OCI-LY7 (cell line): ENCODE measurements at regions of chr1 and their contacts with region 1.

Region 1: GRCh38 chr1:111719674-111720132 is 19.5 kb downstream of the INKA2 start:
- DNase-seq: no peak
- H3K4me3 ChIP-seq: no peak overlapping the region
- H3K27ac ChIP-seq: no peak overlapping the region
- H3K4me1 ChIP-seq: peaks cover 11% of the 10 kb centered on the region
- CTCF ChIP-seq: no peak

Region 2: GRCh38 chr1:111704776-111705175 is 14.9 kb before region 1 on chr1:
- CTCF ChIA-PET with region 1: no interaction called
- POLR2A ChIA-PET with region 1: interaction called, 11 read pairs
- intact Hi-C with region 1: no loop called
- DNase-seq: no peak
- H3K4me3 ChIP-seq: no peak overlapping the region
- H3K27ac ChIP-seq: no peak overlapping the region
- H3K4me1 ChIP-seq: no peaks in the 10 kb centered on the region
- CTCF ChIP-seq: no peak

Region 3: GRCh38 chr1:111769517-111770146 is 49.9 kb after region 1 on chr1:
- CTCF ChIA-PET with region 1: no interaction called
- POLR2A ChIA-PET with region 1: interaction called, 3 read pairs
- intact Hi-C with region 1: loop called (anchors 2 kb)
- DNase-seq: peak; percentile 80
- H3K4me3 ChIP-seq: no peak overlapping the region
- H3K27ac ChIP-seq: no peak overlapping the region
- H3K4me1 ChIP-seq: no peaks in the 10 kb centered on the region
- CTCF ChIP-seq: peak; percentile 97

Region 4: DNA sequence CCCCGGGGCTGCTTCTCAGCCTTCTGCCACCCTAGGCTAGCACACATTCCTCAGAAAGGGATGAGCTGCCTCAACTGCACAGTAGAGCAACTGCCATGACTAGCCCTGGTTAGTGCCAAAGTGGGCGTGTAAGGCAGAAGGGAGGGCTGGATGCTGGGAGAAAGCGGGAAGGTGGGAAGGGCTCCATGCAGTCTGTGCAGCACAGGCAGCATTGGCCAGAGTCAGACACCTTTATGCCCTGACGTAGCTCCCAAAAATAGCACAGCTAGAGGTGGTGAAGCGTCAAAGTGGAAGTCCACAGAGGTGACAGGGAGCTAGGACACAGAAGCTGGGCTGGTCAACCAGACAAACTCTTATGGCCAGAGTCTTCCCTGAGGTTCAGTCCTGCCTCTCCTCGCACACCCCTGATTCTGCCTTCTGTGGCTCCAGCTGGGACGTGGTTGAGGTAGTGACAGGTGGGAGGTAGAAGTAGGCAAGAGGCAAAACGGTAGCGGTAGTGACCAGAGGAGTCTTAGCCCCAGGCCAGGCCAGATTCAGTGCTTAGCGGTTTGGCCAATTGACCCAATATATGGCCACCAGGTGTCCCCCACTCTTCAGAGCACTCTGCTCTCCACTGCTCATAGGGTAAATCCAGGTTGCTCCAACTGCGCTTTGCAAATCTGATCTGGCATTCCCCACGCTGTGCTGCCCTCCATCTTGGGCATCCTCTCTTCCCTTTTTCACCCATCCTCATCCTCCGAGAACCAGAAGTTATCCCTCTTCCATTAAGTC is 81.6 kb after region 1 on chr1:
- CTCF ChIA-PET with region 1: no interaction called
- POLR2A ChIA-PET with region 1: no interaction called
- intact Hi-C with region 1: no loop called
- DNase-seq: no peak
- H3K4me3 ChIP-seq: no peak overlapping the region
- H3K27ac ChIP-seq: no peak overlapping the region
- H3K4me1 ChIP-seq: no peaks in the 10 kb centered on the region
- CTCF ChIP-seq: no peak